B cell (primary cell): ENCODE measurements at regions of chr10 and their contacts with region 1.

Region 1: DNA sequence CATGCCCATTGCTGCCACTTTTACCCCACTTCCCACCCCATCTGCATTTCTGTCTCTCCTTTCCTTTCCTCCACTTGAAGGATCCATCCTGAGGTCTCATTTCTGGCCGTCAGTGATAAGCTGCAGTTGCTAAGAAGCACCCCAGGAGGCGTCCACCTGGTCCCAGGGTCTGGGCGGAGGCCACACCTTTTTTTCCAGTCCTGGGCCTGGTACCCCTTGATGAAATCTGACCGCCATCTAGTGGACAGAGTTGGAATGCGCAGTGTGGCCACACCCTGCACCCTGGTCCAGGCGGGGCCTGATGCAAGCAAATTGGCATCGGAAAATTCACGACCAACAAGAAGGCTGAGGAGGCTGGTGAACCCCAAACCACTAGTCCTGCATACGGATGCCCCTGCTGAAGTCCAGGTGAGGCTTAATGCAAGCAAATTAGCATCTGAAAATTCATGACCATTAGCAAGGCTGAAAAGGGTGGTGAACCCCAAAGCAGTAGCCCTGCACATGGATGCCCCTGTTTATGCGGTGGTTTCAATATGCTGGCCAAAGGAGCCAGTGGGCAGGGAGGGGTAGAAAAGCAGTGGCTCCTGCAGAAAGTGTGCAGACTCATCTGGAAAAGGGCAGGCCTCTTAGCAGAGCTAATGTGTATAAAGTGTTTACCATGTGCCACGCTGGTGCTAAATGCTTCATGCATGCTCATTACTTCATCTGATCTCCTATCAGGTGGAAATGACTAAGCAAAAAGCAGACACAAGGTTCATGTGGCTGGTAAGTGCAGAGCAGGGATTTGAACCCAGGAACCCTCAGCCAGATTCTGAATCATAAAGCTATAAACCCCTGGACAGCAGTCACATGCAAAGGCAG is 43.2 kb downstream of the GPAM start:
- DNase-seq: peak; percentile 69
- ATAC-seq: peak; percentile 98
- H3K4me3 ChIP-seq: no peak overlapping the region
- H3K4me3 Mint-ChIP-seq: no peak overlapping the region
- H3K27ac ChIP-seq: no peak overlapping the region
- H3K27ac Mint-ChIP-seq: no peak overlapping the region
- H3K4me1 ChIP-seq: no peaks in the 10 kb centered on the region
- H3K4me1 Mint-ChIP-seq: peaks cover 6% of the 10 kb centered on the region
- H3K27me3 ChIP-seq: no peaks in the 10 kb centered on the region
- H3K27me3 Mint-ChIP-seq: no peaks in the 10 kb centered on the region
- CTCF ChIP-seq: peak; percentile 84

Region 2: GRCh38 chr10:112059220-112059619 is 81.1 kb before region 1 on chr10:
- CTCF ChIA-PET with region 1: no interaction called
- POLR2A ChIA-PET with region 1: no interaction called
- intact Hi-C with region 1: no loop called
- DNase-seq: no peak
- ATAC-seq: no peak
- H3K4me3 ChIP-seq: no peak overlapping the region
- H3K4me3 Mint-ChIP-seq: no peak overlapping the region
- H3K27ac ChIP-seq: no peak overlapping the region
- H3K27ac Mint-ChIP-seq: no peak overlapping the region
- H3K4me1 ChIP-seq: no peaks in the 10 kb centered on the region
- H3K4me1 Mint-ChIP-seq: no peaks in the 10 kb centered on the region
- H3K27me3 ChIP-seq: no peaks in the 10 kb centered on the region
- H3K27me3 Mint-ChIP-seq: peaks cover 3% of the 10 kb centered on the region
- CTCF ChIP-seq: no peak

Region 3: GRCh38 chr10:112115799-112116385 is 24.4 kb before region 1 on chr10:
- CTCF ChIA-PET with region 1: interaction called, 15 read pairs
- POLR2A ChIA-PET with region 1: no interaction called
- intact Hi-C with region 1: no loop called
- DNase-seq: peak; percentile 44
- ATAC-seq: no peak
- H3K4me3 ChIP-seq: no peak overlapping the region
- H3K4me3 Mint-ChIP-seq: no peak overlapping the region
- H3K27ac ChIP-seq: no peak overlapping the region
- H3K27ac Mint-ChIP-seq: no peak overlapping the region
- H3K4me1 ChIP-seq: no peaks in the 10 kb centered on the region
- H3K4me1 Mint-ChIP-seq: no peaks in the 10 kb centered on the region
- H3K27me3 ChIP-seq: peaks cover 0 to 6% (median 0%) of the 10 kb centered on the region in 4 experiments
- H3K27me3 Mint-ChIP-seq: no peaks in the 10 kb centered on the region
- CTCF ChIP-seq: peak; percentile 75

Region 4: DNA sequence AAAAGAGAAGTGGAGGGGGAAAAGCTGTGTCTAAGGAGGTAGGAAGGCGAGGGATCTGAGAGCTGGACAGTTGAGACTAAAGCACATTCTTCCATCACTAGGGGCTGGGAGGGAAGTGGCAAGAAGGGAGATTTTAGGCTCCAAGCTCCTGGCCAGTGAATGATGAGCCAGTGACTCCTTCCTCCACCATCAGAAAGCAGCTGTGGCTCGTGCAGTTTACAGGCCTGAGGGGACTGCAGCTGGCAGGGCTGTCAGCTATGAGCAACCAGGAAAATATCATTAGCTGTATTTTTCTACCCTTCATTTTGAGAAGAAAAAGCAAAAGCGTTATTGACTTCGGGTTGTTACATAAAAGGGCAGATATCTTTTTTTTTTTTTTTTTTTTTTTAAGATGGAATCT is 17.5 kb before region 1 on chr10:
- CTCF ChIA-PET with region 1: interaction called, 27 read pairs
- POLR2A ChIA-PET with region 1: no interaction called
- intact Hi-C with region 1: no loop called
- DNase-seq: no peak
- ATAC-seq: no peak
- H3K4me3 ChIP-seq: no peak overlapping the region
- H3K4me3 Mint-ChIP-seq: no peak overlapping the region
- H3K27ac ChIP-seq: no peak overlapping the region
- H3K27ac Mint-ChIP-seq: no peak overlapping the region
- H3K4me1 ChIP-seq: no peaks in the 10 kb centered on the region
- H3K4me1 Mint-ChIP-seq: no peaks in the 10 kb centered on the region
- H3K27me3 ChIP-seq: peaks cover 0 to 6% (median 0%) of the 10 kb centered on the region in 4 experiments
- H3K27me3 Mint-ChIP-seq: no peaks in the 10 kb centered on the region
- CTCF ChIP-seq: no peak

Region 5: GRCh38 chr10:112151524-112152039 is 11.2 kb after region 1 on chr10:
- CTCF ChIA-PET with region 1: interaction called, 13 read pairs
- POLR2A ChIA-PET with region 1: no interaction called
- intact Hi-C with region 1: no loop called
- DNase-seq: no peak
- ATAC-seq: no peak
- H3K4me3 ChIP-seq: no peak overlapping the region
- H3K4me3 Mint-ChIP-seq: no peak overlapping the region
- H3K27ac ChIP-seq: no peak overlapping the region
- H3K27ac Mint-ChIP-seq: no peak overlapping the region
- H3K4me1 ChIP-seq: no peaks in the 10 kb centered on the region
- H3K4me1 Mint-ChIP-seq: no peaks in the 10 kb centered on the region
- H3K27me3 ChIP-seq: no peaks in the 10 kb centered on the region
- H3K27me3 Mint-ChIP-seq: no peaks in the 10 kb centered on the region
- CTCF ChIP-seq: no peak

Region 6: GRCh38 chr10:112183329-112184051 is 43.1 kb after region 1 on chr10 and contains the start of gene GPAM:
- CTCF ChIA-PET with region 1: interaction called, 3 read pairs
- POLR2A ChIA-PET with region 1: no interaction called
- intact Hi-C with region 1: loop called (anchors 1 kb)
- DNase-seq: peak; percentile 96
- ATAC-seq: peak; percentile 96
- H3K4me3 ChIP-seq: peak within 1 kb of the TSS; percentile 88 to 97 (median 95)
- H3K4me3 Mint-ChIP-seq: peak within 1 kb of the TSS; percentile 97
- H3K27ac ChIP-seq: peak within 1 kb of the TSS; percentile 49 to 81
- H3K27ac Mint-ChIP-seq: peak within 1 kb of the TSS; percentile 95
- H3K4me1 ChIP-seq: peaks cover 12 to 18% of the 10 kb centered on the region in 2 donors
- H3K4me1 Mint-ChIP-seq: peaks cover 23% of the 10 kb centered on the region
- H3K27me3 ChIP-seq: no peaks in the 10 kb centered on the region
- H3K27me3 Mint-ChIP-seq: no peaks in the 10 kb centered on the region
- CTCF ChIP-seq: no peak
- total RNA-seq, gene GPAM: 8.2 and 12.0 TPM in 2 replicates

Region 7: GRCh38 chr10:112258407-112258806 is 118.1 kb after region 1 on chr10:
- CTCF ChIA-PET with region 1: no interaction called
- POLR2A ChIA-PET with region 1: no interaction called
- intact Hi-C with region 1: no loop called
- DNase-seq: no peak
- ATAC-seq: no peak
- H3K4me3 ChIP-seq: no peak overlapping the region
- H3K4me3 Mint-ChIP-seq: no peak overlapping the region
- H3K27ac ChIP-seq: no peak overlapping the region
- H3K27ac Mint-ChIP-seq: no peak overlapping the region
- H3K4me1 ChIP-seq: no peaks in the 10 kb centered on the region
- H3K4me1 Mint-ChIP-seq: no peaks in the 10 kb centered on the region
- H3K27me3 ChIP-seq: no peaks in the 10 kb centered on the region
- H3K27me3 Mint-ChIP-seq: no peaks in the 10 kb centered on the region
- CTCF ChIP-seq: no peak

Region 8: GRCh38 chr10:112471878-112472487 is 331.6 kb after region 1 on chr10:
- CTCF ChIA-PET with region 1: interaction called, 13 read pairs
- POLR2A ChIA-PET with region 1: no interaction called
- intact Hi-C with region 1: no loop called
- DNase-seq: peak; percentile 54
- ATAC-seq: peak; percentile 47
- H3K4me3 ChIP-seq: no peak overlapping the region
- H3K4me3 Mint-ChIP-seq: no peak overlapping the region
- H3K27ac ChIP-seq: no peak overlapping the region
- H3K27ac Mint-ChIP-seq: peak overlapping the region; percentile 17
- H3K4me1 ChIP-seq: peaks cover 0 to 3% of the 10 kb centered on the region in 2 donors
- H3K4me1 Mint-ChIP-seq: peaks cover 4% of the 10 kb centered on the region
- H3K27me3 ChIP-seq: no peaks in the 10 kb centered on the region
- H3K27me3 Mint-ChIP-seq: no peaks in the 10 kb centered on the region
- CTCF ChIP-seq: peak; percentile 83